ENCODE measurements at regions of chr17 and their contacts with region 1.

Region 1: GRCh38 chr17:49414622-49415350 is at the start of gene PHB1:
- DNase-seq: peak; percentile 96 to 98 (median 97)
- ATAC-seq: peak; percentile 100
- H3K4me3 ChIP-seq: peak within 1 kb of the TSS; percentile 91
- H3K27ac ChIP-seq: peak within 1 kb of the TSS; percentile 66
- H3K4me1 ChIP-seq: peaks cover 0 to 5% of the 10 kb centered on the region in 2 experiments; a peak in 1 of 5 replicates
- H3K27me3 ChIP-seq: no peaks in the 10 kb centered on the region
- CTCF ChIP-seq: no peak; a peak in 1 of 6 replicates
- EP300 ChIP-seq: no peak
- POLR2A ChIP-seq: peak; percentile 91
- RAD21 ChIP-seq: no peak
- polyA plus RNA-seq, gene PHB1: 191 to 412 TPM

Region 2: GRCh38 chr17:49694847-49695683 is 280.3 kb after region 1 on chr17:
- CTCF ChIA-PET with region 1: no interaction called
- POLR2A ChIA-PET with region 1: no interaction called
- in situ Hi-C with region 1: loop called (anchors 5 kb)
- intact Hi-C with region 1: loop called (anchors 10 kb)
- DNase-seq: peak; percentile 57 to 68 (median 60)
- ATAC-seq: peak; percentile 64
- H3K4me3 ChIP-seq: no peak overlapping the region
- H3K27ac ChIP-seq: no peak overlapping the region
- H3K4me1 ChIP-seq: peaks cover 0 to 4% of the 10 kb centered on the region in 2 experiments; a peak in 1 of 5 replicates
- H3K27me3 ChIP-seq: no peaks in the 10 kb centered on the region; a peak in 1 of 5 replicates
- CTCF ChIP-seq: peak; percentile 91 to 96 (median 92)
- EP300 ChIP-seq: no peak
- POLR2A ChIP-seq: no peak
- RAD21 ChIP-seq: peak; percentile 93 to 96

Measured in K562 (cell line).